GM23248 (cell line): ENCODE measurements at regions of chr20 and their contacts with region 1.

Region 1: GRCh38 chr20:37392421-37393178 is 46.7 kb downstream of the SRC start:
- DNase-seq: peak; percentile 55
- H3K4me3 ChIP-seq: no peak overlapping the region
- H3K27ac ChIP-seq: no peak overlapping the region
- H3K4me1 ChIP-seq: no peaks in the 10 kb centered on the region
- H3K27me3 ChIP-seq: no peaks in the 10 kb centered on the region

Region 2: GRCh38 chr20:36298795-36299339 is 1093.7 kb before region 1 on chr20:
- in situ Hi-C with region 1: no loop called
- DNase-seq: no peak
- H3K4me3 ChIP-seq: no peak overlapping the region
- H3K27ac ChIP-seq: no peak overlapping the region
- H3K4me1 ChIP-seq: no peaks in the 10 kb centered on the region
- H3K27me3 ChIP-seq: peaks cover 62% of the 10 kb centered on the region

Region 3: DNA sequence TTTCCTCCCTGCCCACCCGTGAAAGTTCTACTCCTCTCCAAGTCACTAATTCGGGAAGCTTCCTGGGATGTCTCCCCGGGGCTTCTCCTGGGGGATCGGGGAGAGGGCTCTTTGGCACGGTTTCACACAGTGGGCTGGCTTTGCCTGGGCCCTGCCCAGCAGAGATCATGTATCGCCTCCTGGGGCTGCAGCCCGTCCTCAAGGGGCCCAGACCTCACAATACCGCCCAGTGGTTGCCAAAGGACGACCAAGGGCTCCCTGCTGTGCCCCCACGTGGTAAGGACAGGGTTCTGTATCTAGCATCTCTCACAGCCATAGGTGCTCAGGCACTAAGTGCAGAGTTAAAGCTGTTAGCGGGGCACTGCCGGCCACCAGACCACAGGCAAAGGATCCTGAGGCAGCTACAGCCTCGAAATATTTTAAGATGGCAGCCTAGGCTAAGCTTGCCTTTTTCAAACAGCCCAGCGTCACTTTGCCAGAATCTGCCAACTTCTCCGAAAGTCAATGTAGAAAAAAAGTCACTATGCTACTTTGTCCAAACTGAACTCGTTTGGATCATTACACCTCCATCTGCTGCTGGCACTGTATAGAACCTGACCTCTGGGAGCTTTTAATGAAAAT is 127.0 kb after region 1 on chr20:
- in situ Hi-C with region 1: loop called (anchors 10 kb)
- DNase-seq: no peak
- H3K4me3 ChIP-seq: no peak overlapping the region
- H3K27ac ChIP-seq: no peak overlapping the region
- H3K4me1 ChIP-seq: peaks cover 5% of the 10 kb centered on the region
- H3K27me3 ChIP-seq: no peaks in the 10 kb centered on the region